Activated naive CD4-positive, alpha-beta T cell treated with anti-CD3 and anti-CD28 coated beads for 36 hours (primary cell): ENCODE measurements at regions of chr5 and their contacts with region 1.

Region 1: DNA sequence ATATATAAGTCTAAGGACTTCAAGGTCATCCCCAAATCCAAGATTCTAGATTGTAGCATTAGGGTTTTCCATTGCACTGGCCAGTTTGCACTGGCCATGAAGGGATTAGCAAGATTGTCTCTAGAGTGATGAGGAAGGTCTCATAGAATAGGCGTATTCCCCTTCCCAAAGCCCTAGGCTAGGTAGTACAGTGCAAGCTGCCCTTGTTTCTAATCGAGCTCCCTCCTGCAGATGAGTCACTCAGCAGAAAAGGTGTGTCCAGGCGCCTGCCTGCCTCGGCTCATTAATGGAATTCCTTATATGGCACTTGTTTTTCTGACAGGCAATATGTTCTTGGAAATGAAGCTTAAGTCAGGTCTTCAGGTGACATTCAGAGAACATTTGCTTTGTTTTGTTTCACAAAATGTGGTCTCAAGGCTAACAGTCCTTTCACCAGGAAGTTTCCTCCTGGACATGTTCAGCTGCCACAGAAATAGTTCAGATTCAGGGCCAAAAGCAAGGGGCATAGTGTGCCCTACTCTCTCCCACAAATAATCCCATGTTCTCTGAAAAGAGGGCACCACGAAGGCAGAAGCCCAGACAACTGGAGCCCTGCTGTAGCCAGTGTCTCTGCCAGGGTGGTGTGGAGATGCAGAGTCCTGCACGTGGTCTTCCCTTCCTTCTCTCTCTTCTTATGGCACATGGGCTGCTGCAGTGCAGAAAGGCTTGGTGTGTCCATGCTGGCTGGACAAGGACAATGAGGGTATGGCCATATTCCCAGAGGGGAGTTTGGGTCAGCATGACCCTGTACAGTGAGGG is 281.1 kb upstream of the MAP3K1 start:
- DNase-seq: peak; percentile 59
- H3K4me3 Mint-ChIP-seq: no peak overlapping the region
- H3K27ac Mint-ChIP-seq: no peak overlapping the region
- H3K4me1 Mint-ChIP-seq: peaks cover 14% of the 10 kb centered on the region
- H3K27me3 Mint-ChIP-seq: no peaks in the 10 kb centered on the region

Region 2: DNA sequence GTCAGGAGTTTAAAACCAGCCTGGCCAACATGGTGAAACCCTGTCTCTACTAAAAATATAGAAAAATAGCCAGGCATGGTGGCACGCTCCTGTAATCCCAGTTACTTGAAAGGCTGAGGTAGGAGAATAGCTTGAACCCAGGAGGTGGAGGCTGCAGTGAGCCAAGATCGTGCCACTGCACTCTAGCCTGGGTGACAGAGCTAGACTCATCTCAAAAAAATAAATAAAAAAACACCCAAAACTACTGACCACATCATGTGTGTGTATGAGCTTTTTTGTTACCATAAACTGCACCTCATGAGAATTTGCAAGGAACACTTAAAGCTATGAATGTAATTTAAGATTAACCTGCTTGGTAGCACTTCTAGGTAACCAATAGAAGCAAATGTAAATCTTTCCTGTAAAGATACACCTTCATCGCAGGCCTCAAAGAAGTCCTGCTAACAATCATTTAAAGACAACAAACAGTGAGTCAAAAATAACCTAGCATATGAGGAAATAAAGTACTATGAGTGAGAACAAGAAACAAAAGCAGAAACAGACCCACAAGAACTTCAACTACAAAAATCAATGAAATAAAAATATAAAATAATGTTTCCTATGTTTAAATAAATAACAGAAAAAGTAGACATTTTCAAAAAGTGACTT is 835.1 kb before region 1 on chr5:
- CTCF ChIA-PET with region 1: no interaction called
- intact Hi-C with region 1: no loop called
- DNase-seq: no peak
- H3K4me3 Mint-ChIP-seq: no peak overlapping the region
- H3K27ac Mint-ChIP-seq: no peak overlapping the region
- H3K4me1 Mint-ChIP-seq: peaks cover 10% of the 10 kb centered on the region
- H3K27me3 Mint-ChIP-seq: no peaks in the 10 kb centered on the region

Region 3: GRCh38 chr5:56244627-56245026 is 289.6 kb before region 1 on chr5:
- CTCF ChIA-PET with region 1: no interaction called
- intact Hi-C with region 1: no loop called
- DNase-seq: no peak
- H3K4me3 Mint-ChIP-seq: no peak overlapping the region
- H3K27ac Mint-ChIP-seq: no peak overlapping the region
- H3K4me1 Mint-ChIP-seq: no peaks in the 10 kb centered on the region
- H3K27me3 Mint-ChIP-seq: no peaks in the 10 kb centered on the region

Region 4: GRCh38 chr5:56490951-56491468 is 43.2 kb before region 1 on chr5:
- CTCF ChIA-PET with region 1: no interaction called
- intact Hi-C with region 1: loop called (anchors 1 kb)
- DNase-seq: peak; percentile 80
- H3K4me3 Mint-ChIP-seq: peak overlapping the region; percentile 45
- H3K27ac Mint-ChIP-seq: peak overlapping the region; percentile 65
- H3K4me1 Mint-ChIP-seq: peaks cover 25% of the 10 kb centered on the region
- H3K27me3 Mint-ChIP-seq: no peaks in the 10 kb centered on the region

Region 5: GRCh38 chr5:56522960-56523359 is 11.3 kb before region 1 on chr5:
- CTCF ChIA-PET with region 1: no interaction called
- intact Hi-C with region 1: no loop called
- DNase-seq: no peak
- H3K4me3 Mint-ChIP-seq: no peak overlapping the region
- H3K27ac Mint-ChIP-seq: no peak overlapping the region
- H3K4me1 Mint-ChIP-seq: no peaks in the 10 kb centered on the region
- H3K27me3 Mint-ChIP-seq: no peaks in the 10 kb centered on the region